Common myeloid progenitor, CD34-positive (primary cell): ENCODE measurements at regions of chr14 and their contacts with region 1.

Region 1: GRCh38 chr14:92659765-92660561 is 88.5 kb downstream of the LGMN start:
- DNase-seq: peak; percentile 82 to 94 (median 91)
- H3K4me3 ChIP-seq: peak overlapping the region in 3 of 7 experiments; percentile 25 to 43 (median 30)
- H3K27ac ChIP-seq: peak overlapping the region; percentile 48 to 77
- H3K4me1 ChIP-seq: peaks cover 34 to 91% (median 85%) of the 10 kb centered on the region in 4 experiments
- H3K27me3 ChIP-seq: no peaks in the 10 kb centered on the region

Region 2: GRCh38 chr14:92680781-92681650 is 21.1 kb after region 1 on chr14:
- CTCF ChIA-PET with region 1: interaction called, 29 read pairs
- POLR2A ChIA-PET with region 1: no interaction called
- DNase-seq: peak; percentile 75 to 86 (median 81)
- H3K4me3 ChIP-seq: no peak overlapping the region
- H3K27ac ChIP-seq: no peak overlapping the region
- H3K4me1 ChIP-seq: peaks cover 0 to 22% (median 19%) of the 10 kb centered on the region in 4 experiments
- H3K27me3 ChIP-seq: no peaks in the 10 kb centered on the region